Calu3 (cell line): ENCODE measurements at regions of chr1 and their contacts with region 1.

Region 1: GRCh38 chr1:208245185-208245705 is 1.1 kb upstream of the PLXNA2 start:
- DNase-seq: peak; percentile 89
- H3K4me3 Mint-ChIP-seq: peak overlapping the region; percentile 93
- H3K27ac Mint-ChIP-seq: no peak overlapping the region
- H3K4me1 Mint-ChIP-seq: peaks cover 18% of the 10 kb centered on the region
- H3K27me3 Mint-ChIP-seq: peaks cover 16% of the 10 kb centered on the region
- CTCF ChIP-seq: peak; percentile 74

Region 2: GRCh38 chr1:207997486-207998268 is 247.6 kb before region 1 on chr1:
- CTCF ChIA-PET with region 1: interaction called, 15 read pairs
- intact Hi-C with region 1: no loop called
- DNase-seq: peak; percentile 82
- H3K4me3 Mint-ChIP-seq: no peak overlapping the region
- H3K27ac Mint-ChIP-seq: no peak overlapping the region
- H3K4me1 Mint-ChIP-seq: no peaks in the 10 kb centered on the region
- H3K27me3 Mint-ChIP-seq: peaks cover 51% of the 10 kb centered on the region
- CTCF ChIP-seq: peak; percentile 75

Region 3: GRCh38 chr1:208029381-208030287 is 215.6 kb before region 1 on chr1:
- CTCF ChIA-PET with region 1: interaction called, 131 read pairs
- intact Hi-C with region 1: no loop called
- DNase-seq: no peak
- H3K4me3 Mint-ChIP-seq: no peak overlapping the region
- H3K27ac Mint-ChIP-seq: no peak overlapping the region
- H3K4me1 Mint-ChIP-seq: no peaks in the 10 kb centered on the region
- H3K27me3 Mint-ChIP-seq: peaks cover 5% of the 10 kb centered on the region
- CTCF ChIP-seq: no peak

Region 4: DNA sequence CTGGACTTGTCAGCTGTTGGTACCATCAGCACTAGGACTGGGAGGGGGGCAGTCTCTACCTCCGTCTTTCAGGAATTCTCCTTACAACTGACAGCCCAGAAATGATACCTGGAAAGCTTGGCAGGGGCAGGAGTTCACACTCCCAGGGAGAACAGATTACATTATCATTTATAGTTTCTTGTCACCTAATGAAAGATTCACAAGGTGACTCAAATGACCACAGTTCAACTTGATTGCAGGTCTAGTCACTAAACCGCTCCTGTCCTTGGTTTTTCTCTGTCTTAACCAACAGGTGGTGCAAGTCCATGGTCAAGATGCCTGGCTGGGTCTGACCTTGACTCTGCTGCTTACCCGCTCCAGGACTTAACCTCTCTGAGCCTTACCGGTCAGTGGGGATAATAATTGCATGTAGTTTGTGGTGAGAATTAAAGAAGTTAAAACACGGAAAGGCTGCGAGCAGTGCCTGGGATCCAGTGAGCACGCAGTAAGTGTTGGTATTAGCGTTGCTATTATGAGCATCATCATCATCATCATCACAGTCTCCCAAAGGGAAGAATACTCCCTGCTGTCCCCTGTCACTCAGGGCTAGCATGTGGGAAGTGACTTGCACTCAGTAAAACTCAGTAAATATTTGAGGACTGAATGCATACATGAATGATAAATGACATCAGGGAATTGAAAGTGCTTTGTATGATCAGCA is 209.0 kb before region 1 on chr1:
- CTCF ChIA-PET with region 1: interaction called, 6 read pairs
- intact Hi-C with region 1: loop called (anchors 1 kb)
- DNase-seq: peak; percentile 25
- H3K4me3 Mint-ChIP-seq: no peak overlapping the region
- H3K27ac Mint-ChIP-seq: no peak overlapping the region
- H3K4me1 Mint-ChIP-seq: no peaks in the 10 kb centered on the region
- H3K27me3 Mint-ChIP-seq: no peaks in the 10 kb centered on the region
- CTCF ChIP-seq: peak; percentile 46

Region 5: DNA sequence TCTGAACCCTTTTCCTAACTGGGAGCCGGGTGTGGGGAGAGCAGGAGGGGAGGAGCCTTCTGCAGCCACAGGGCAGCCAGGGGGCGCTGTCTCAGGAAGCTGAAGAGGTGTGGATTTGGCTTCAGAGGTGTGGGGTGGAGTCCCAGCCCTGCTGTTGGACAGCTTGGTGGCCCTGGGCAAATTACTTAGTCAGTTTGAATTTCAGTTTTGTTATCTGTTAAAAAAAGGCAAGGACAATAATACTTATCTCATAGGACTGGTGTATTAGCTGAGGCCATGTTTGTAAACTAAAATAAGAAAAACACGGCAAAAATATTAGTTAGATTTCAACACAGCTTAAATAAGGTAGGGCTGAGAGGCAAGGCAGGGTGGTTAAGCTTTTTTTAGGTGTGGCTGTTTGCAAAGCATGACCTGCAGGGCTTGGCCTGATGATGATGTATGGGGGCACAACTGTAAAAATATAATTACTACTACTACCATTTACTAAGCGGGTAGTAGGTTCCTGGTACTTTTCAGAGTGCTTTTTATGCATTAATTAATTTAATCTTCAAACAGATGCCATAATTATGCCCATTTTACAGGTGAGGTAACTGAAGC is 112.9 kb before region 1 on chr1:
- CTCF ChIA-PET with region 1: interaction called, 67 read pairs
- intact Hi-C with region 1: loop called (anchors 1 kb)
- DNase-seq: peak; percentile 97
- H3K4me3 Mint-ChIP-seq: peak overlapping the region; percentile 37
- H3K27ac Mint-ChIP-seq: no peak overlapping the region
- H3K4me1 Mint-ChIP-seq: peaks cover 21% of the 10 kb centered on the region
- H3K27me3 Mint-ChIP-seq: no peaks in the 10 kb centered on the region
- CTCF ChIP-seq: peak; percentile 87

Region 6: GRCh38 chr1:208203127-208203847 is 42.0 kb before region 1 on chr1:
- CTCF ChIA-PET with region 1: interaction called, 24 read pairs
- intact Hi-C with region 1: no loop called
- DNase-seq: peak; percentile 77
- H3K4me3 Mint-ChIP-seq: peak overlapping the region; percentile 42
- H3K27ac Mint-ChIP-seq: peak overlapping the region; percentile 62
- H3K4me1 Mint-ChIP-seq: peaks cover 27% of the 10 kb centered on the region
- H3K27me3 Mint-ChIP-seq: no peaks in the 10 kb centered on the region
- CTCF ChIP-seq: no peak